ENCODE measurements at regions of chr15 and their contacts with region 1.

Region 1: GRCh38 chr15:63473999-63474809 is 30.2 kb upstream of the USP3 start:
- DNase-seq: peak; percentile 76
- H3K4me3 ChIP-seq: peak overlapping the region; percentile 45
- H3K27ac ChIP-seq: peak overlapping the region; percentile 88
- H3K4me1 ChIP-seq: peaks cover 64% of the 10 kb centered on the region
- CTCF ChIP-seq: peak; percentile 45; the same call in 1 of the 2 replicates

Region 2: GRCh38 chr15:63487076-63487757 is 13.0 kb after region 1 on chr15:
- CTCF ChIA-PET with region 1: interaction called, 6 read pairs
- POLR2A ChIA-PET with region 1: interaction called, 28 read pairs
- intact Hi-C with region 1: loop called (anchors 1 kb)
- DNase-seq: peak; percentile 90
- H3K4me3 ChIP-seq: peak overlapping the region; percentile 48
- H3K27ac ChIP-seq: peak overlapping the region; percentile 83
- H3K4me1 ChIP-seq: peaks cover 72% of the 10 kb centered on the region
- CTCF ChIP-seq: peak; percentile 97

Region 3: GRCh38 chr15:63497642-63498467 is 23.7 kb after region 1 on chr15:
- CTCF ChIA-PET with region 1: no interaction called
- POLR2A ChIA-PET with region 1: interaction called, 23 read pairs
- intact Hi-C with region 1: loop called (anchors 1 kb)
- DNase-seq: peak; percentile 85
- H3K4me3 ChIP-seq: peak overlapping the region; percentile 14
- H3K27ac ChIP-seq: peak overlapping the region; percentile 78
- H3K4me1 ChIP-seq: peaks cover 75% of the 10 kb centered on the region
- CTCF ChIP-seq: no peak